Activated CD4-positive, alpha-beta memory T cell treated with anti-CD3 and anti-CD28 coated beads, Interleukin-2, amount 10 ng/mL, durations not matched to agents 7 days and 5 days (primary cell): ENCODE measurements at regions of chr17 and their contacts with region 1.

Region 1: DNA sequence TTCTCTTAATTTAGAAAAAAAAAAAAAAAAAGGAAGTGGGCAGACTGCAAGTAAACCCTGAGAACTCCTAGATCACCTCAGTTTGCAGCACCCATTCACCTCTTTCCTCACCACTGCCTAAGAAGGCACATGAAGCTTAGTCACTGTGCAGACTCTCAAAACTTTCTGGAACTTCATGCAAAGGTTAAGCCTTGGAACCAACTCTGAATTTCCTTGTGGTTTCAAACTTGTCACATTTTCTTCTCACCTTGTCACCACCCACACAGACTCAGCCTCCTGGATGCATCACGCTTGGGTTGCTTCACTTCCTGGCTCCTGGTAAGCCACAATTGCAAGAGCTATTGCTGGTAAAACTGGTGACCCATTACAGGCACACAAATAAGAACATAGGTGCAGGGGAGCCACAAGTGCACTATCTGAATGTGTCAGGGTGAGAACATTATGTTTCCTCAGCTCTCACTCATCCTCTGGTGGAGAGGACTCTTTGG is 15.0 kb upstream of the CPD start:
- DNase-seq: peak; percentile 88
- H3K4me3 Mint-ChIP-seq: no peak overlapping the region
- H3K27ac Mint-ChIP-seq: peak overlapping the region; percentile 90
- H3K4me1 Mint-ChIP-seq: peaks cover 24% of the 10 kb centered on the region
- H3K27me3 Mint-ChIP-seq: peaks cover 1% of the 10 kb centered on the region

Region 2: DNA sequence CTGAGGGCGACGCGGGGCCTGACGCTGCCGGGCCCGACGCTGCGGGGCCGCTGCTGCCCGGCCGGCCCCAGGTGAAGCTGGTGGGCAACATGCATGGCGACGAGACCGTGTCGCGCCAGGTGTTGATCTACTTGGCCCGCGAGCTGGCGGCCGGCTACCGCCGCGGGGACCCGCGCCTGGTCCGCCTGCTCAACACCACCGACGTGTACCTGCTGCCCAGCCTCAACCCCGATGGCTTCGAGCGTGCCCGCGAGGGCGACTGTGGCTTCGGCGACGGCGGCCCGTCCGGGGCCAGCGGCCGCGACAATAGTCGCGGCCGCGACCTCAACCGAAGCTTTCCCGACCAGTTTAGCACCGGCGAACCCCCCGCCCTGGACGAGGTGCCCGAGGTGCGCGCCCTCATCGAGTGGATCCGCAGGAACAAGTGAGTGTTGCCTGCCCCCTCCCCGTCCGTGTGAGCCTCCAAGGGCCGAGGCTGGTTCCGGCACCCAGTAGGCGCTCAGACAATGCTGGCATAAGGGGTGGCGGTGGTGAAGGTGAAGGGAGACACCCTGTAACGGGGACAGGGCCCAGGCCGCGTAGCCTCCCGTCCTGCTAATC is 15.6 kb after region 1 on chr17:
- CTCF ChIA-PET with region 1: interaction called, 6 read pairs
- POLR2A ChIA-PET with region 1: interaction called, 10 read pairs
- DNase-seq: peak; percentile 46
- H3K4me3 Mint-ChIP-seq: peak overlapping the region; percentile 80
- H3K27ac Mint-ChIP-seq: peak overlapping the region; percentile 40
- H3K4me1 Mint-ChIP-seq: peaks cover 51% of the 10 kb centered on the region
- H3K27me3 Mint-ChIP-seq: peaks cover 13% of the 10 kb centered on the region